CD4-positive, alpha-beta T cell (primary cell): ENCODE measurements at regions of chr3 and their contacts with region 1.

Region 1: DNA sequence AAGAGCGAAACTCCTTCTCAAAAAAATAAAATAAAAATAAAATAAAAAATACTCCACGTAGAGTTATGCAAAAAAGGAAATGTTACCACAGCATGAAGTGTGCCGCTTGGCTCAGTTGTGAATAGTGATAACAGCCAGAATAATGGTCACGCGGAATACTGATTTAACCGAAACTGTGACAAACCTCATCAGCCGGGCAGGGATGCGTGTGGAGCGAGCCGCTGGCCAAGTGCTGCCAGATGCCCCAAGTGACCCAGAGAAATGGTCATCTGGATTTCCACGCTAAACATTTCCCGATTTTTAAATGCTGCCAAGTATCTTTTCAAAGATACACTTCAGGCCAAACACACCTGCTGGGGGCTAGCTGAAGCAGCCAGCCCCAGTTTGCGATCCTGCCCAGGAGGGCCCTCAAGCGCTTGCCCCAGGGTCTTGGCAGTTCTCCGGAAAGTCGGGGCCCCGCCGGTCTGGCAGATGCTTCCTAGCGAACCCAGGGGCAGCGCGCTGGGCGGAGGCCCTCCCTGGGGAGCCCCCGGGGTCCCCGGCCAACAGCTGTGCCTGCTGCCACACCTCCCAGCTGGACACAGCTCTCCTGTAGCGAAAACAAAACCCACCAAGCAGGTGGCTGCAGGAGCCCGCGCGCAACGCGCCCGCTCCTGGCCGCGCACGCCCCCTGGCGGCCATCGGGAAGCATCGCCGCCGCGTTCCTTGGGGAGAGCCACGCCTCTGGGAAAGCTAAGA is 35.1 kb downstream of the CMTM6 start:
- DNase-seq: peak; percentile 44 to 90 (median 72)
- ATAC-seq: peak; percentile 84
- H3K4me3 ChIP-seq: peak overlapping the region; percentile 58
- H3K4me3 Mint-ChIP-seq: peak overlapping the region; percentile 54
- H3K27ac ChIP-seq: peak overlapping the region; percentile 18 to 53
- H3K27ac Mint-ChIP-seq: no peak overlapping the region
- H3K4me1 ChIP-seq: peaks cover 37% of the 10 kb centered on the region
- H3K4me1 Mint-ChIP-seq: peaks cover 55% of the 10 kb centered on the region
- H3K27me3 ChIP-seq: no peaks in the 10 kb centered on the region
- H3K27me3 Mint-ChIP-seq: no peaks in the 10 kb centered on the region
- CTCF ChIP-seq: peak; percentile 99

Region 2: GRCh38 chr3:31777092-31777491 is 690.4 kb before region 1 on chr3:
- CTCF ChIA-PET with region 1: no interaction called
- POLR2A ChIA-PET with region 1: no interaction called
- intact Hi-C with region 1: no loop called
- DNase-seq: no peak
- ATAC-seq: no peak
- H3K4me3 ChIP-seq: no peak overlapping the region
- H3K4me3 Mint-ChIP-seq: no peak overlapping the region
- H3K27ac ChIP-seq: no peak overlapping the region
- H3K27ac Mint-ChIP-seq: no peak overlapping the region
- H3K4me1 ChIP-seq: no peaks in the 10 kb centered on the region
- H3K4me1 Mint-ChIP-seq: no peaks in the 10 kb centered on the region
- H3K27me3 ChIP-seq: no peaks in the 10 kb centered on the region
- H3K27me3 Mint-ChIP-seq: peaks cover 5% of the 10 kb centered on the region
- CTCF ChIP-seq: no peak

Region 3: DNA sequence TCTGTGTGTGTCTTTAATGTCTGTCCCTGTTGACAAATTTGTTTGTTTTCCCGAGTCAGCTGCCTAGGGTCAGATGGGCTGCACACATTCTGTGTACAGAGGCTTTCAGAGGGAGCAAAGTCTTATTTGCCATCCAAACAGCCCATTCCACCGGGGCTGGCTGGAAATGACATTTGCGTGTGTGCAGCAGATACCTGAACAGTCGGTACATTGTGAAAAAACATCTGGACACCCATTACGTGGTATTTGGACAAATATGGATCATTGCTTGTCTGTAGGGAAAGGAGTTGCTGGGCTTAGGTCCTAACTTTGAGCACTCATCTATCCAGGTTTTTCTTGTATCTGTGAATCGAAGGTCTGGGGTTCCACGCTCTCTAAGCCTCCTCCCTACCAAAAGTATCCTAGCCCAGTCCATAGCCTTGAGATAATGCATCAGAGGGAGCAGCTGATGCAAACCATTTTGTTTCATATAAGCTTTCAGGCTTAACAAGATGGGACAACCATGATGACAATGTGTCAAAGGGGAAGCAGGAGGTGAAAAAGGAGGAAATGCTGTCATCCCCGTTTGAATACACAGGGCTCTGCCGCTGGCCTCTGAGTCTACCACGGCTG is 251.2 kb before region 1 on chr3:
- CTCF ChIA-PET with region 1: no interaction called
- POLR2A ChIA-PET with region 1: no interaction called
- intact Hi-C with region 1: no loop called
- DNase-seq: no peak
- ATAC-seq: no peak
- H3K4me3 ChIP-seq: no peak overlapping the region
- H3K4me3 Mint-ChIP-seq: no peak overlapping the region
- H3K27ac ChIP-seq: no peak overlapping the region
- H3K27ac Mint-ChIP-seq: no peak overlapping the region
- H3K4me1 ChIP-seq: no peaks in the 10 kb centered on the region
- H3K4me1 Mint-ChIP-seq: no peaks in the 10 kb centered on the region
- H3K27me3 ChIP-seq: no peaks in the 10 kb centered on the region
- H3K27me3 Mint-ChIP-seq: peaks cover 5% of the 10 kb centered on the region
- CTCF ChIP-seq: no peak

Region 4: DNA sequence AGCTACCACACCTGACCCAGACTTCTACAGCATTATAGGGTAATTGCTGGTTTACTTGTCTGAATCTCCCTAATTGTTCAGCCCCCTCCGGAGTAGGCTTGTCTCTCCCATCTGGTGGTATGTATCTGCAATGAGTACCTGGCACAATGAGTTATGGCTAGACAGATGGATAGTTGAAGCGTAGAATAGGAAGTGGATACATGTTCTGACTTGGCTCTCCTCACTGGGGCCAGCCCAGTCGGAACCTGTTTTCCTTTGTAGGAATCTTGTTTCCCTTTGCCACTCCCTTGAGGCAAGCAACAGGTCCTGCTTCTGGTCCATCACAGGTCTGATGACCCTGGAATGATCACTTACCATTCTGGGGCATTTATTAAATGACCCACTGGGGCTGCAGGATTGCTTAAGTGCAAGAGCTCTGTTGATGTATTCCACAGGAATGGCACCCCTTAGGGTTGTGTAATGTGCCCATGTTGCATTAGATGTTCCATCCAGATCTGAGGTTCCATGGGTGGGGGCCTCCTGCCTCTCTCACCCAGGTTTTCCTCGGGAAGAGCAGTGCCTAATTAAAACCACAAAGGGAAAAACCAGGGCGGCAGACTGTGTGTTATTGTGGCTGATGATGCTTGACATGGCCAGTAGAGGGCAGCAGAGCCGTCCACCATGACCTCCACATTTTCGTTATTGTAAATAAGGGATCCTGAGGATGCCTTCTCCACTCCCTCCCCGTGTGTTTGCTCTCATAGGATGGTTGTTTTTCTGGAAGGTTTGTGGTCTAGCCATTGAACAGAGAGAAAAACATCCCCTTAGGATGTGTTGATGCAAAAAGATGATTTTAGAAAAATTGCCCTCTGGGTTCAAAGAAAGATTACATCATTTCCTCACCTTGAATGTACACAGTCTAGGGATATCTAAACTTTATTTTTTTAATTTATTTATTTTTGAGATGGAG is 171.0 kb before region 1 on chr3:
- CTCF ChIA-PET with region 1: interaction called, 6 read pairs
- POLR2A ChIA-PET with region 1: no interaction called
- intact Hi-C with region 1: loop called (anchors 2 kb)
- DNase-seq: peak; percentile 52 to 88 (median 60)
- ATAC-seq: peak; percentile 62
- H3K4me3 ChIP-seq: no peak overlapping the region
- H3K4me3 Mint-ChIP-seq: peak overlapping the region; percentile 76
- H3K27ac ChIP-seq: peak overlapping the region; percentile 60
- H3K27ac Mint-ChIP-seq: peak overlapping the region; percentile 93
- H3K4me1 ChIP-seq: peaks cover 44% of the 10 kb centered on the region
- H3K4me1 Mint-ChIP-seq: peaks cover 43% of the 10 kb centered on the region
- H3K27me3 ChIP-seq: no peaks in the 10 kb centered on the region
- H3K27me3 Mint-ChIP-seq: no peaks in the 10 kb centered on the region
- CTCF ChIP-seq: peak; percentile 93

Region 5: GRCh38 chr3:32391643-32392535 is 75.6 kb before region 1 on chr3 and contains the start of gene CMTM7:
- CTCF ChIA-PET with region 1: interaction called, 49 read pairs
- POLR2A ChIA-PET with region 1: interaction called, 16 read pairs
- intact Hi-C with region 1: no loop called
- DNase-seq: peak; percentile 32 to 81 (median 52)
- ATAC-seq: peak; percentile 54
- H3K4me3 ChIP-seq: peak within 1 kb of the TSS; percentile 92
- H3K4me3 Mint-ChIP-seq: peak within 1 kb of the TSS; percentile 97
- H3K27ac ChIP-seq: peak within 1 kb of the TSS; percentile 77 to 79
- H3K27ac Mint-ChIP-seq: peak within 1 kb of the TSS; percentile 91
- H3K4me1 ChIP-seq: peaks cover 47% of the 10 kb centered on the region
- H3K4me1 Mint-ChIP-seq: peaks cover 61% of the 10 kb centered on the region
- H3K27me3 ChIP-seq: no peaks in the 10 kb centered on the region
- H3K27me3 Mint-ChIP-seq: no peaks in the 10 kb centered on the region
- CTCF ChIP-seq: no peak
- total RNA-seq, gene CMTM7: 31.5 to 35.2 TPM

Region 6: GRCh38 chr3:32406486-32407408 is 60.8 kb before region 1 on chr3:
- CTCF ChIA-PET with region 1: interaction called, 8 read pairs
- POLR2A ChIA-PET with region 1: interaction called, 3 read pairs
- intact Hi-C with region 1: loop called in 1 of 2 experiments (anchors 2 kb)
- DNase-seq: no peak
- ATAC-seq: no peak
- H3K4me3 ChIP-seq: no peak overlapping the region
- H3K4me3 Mint-ChIP-seq: no peak overlapping the region
- H3K27ac ChIP-seq: no peak overlapping the region
- H3K27ac Mint-ChIP-seq: peak overlapping the region; percentile 70
- H3K4me1 ChIP-seq: peaks cover 50% of the 10 kb centered on the region
- H3K4me1 Mint-ChIP-seq: peaks cover 84% of the 10 kb centered on the region
- H3K27me3 ChIP-seq: no peaks in the 10 kb centered on the region
- H3K27me3 Mint-ChIP-seq: no peaks in the 10 kb centered on the region
- CTCF ChIP-seq: no peak

Region 7: DNA sequence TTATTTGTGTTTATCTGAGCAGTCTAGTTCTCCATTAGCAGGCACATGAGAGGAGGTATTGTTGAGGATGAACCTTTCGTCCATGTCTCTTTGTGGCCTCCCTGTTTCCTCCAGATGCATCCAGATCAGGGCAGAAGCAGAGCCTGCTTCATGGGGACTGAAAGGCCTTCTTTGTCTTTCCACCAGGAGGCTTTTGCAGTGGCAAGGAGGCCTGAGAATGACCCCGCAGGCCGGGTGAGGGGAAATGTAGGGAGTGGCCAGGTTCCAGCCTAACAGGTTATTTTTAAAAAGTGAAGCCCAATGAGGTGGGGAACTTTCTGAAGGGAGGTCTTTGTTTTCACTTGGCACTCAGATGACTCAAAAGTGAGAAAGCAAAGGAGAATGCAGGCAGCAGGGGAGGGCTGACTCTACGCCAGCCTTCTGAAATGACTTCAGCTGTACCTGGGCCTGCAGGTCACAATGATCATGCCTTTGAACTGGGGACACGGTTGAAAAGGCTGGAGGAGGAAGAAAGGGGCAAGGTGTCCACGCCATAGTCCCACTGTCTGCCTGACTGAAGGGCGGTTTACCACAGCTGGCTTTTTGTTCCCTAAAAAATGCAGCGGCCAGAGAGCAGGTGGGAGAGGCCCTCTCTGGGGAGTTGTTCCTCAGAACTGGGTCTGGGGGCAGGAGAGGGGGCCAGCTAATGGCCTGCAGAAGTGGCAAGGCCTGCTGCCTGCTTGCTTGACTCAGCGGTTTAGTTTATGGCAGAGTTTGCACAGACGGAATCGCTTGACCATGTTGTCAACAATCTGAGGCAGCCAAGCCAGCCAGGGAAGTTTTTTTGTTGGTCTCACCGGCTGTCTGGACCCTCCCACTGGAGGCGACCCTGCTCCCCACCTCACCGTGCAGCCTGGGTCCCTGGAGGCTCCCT is 47.1 kb before region 1 on chr3:
- CTCF ChIA-PET with region 1: interaction called, 25 read pairs
- POLR2A ChIA-PET with region 1: interaction called, 12 read pairs
- intact Hi-C with region 1: no loop called
- DNase-seq: peak in 4 of 14 experiments; percentile 39 to 55 (median 44)
- ATAC-seq: peak; percentile 35
- H3K4me3 ChIP-seq: no peak overlapping the region
- H3K4me3 Mint-ChIP-seq: peak overlapping the region; percentile 71
- H3K27ac ChIP-seq: peak overlapping the region; percentile 44 to 48
- H3K27ac Mint-ChIP-seq: peak overlapping the region; percentile 95
- H3K4me1 ChIP-seq: peaks cover 69% of the 10 kb centered on the region
- H3K4me1 Mint-ChIP-seq: peaks cover 99% of the 10 kb centered on the region
- H3K27me3 ChIP-seq: no peaks in the 10 kb centered on the region
- H3K27me3 Mint-ChIP-seq: no peaks in the 10 kb centered on the region
- CTCF ChIP-seq: no peak

Region 8: DNA sequence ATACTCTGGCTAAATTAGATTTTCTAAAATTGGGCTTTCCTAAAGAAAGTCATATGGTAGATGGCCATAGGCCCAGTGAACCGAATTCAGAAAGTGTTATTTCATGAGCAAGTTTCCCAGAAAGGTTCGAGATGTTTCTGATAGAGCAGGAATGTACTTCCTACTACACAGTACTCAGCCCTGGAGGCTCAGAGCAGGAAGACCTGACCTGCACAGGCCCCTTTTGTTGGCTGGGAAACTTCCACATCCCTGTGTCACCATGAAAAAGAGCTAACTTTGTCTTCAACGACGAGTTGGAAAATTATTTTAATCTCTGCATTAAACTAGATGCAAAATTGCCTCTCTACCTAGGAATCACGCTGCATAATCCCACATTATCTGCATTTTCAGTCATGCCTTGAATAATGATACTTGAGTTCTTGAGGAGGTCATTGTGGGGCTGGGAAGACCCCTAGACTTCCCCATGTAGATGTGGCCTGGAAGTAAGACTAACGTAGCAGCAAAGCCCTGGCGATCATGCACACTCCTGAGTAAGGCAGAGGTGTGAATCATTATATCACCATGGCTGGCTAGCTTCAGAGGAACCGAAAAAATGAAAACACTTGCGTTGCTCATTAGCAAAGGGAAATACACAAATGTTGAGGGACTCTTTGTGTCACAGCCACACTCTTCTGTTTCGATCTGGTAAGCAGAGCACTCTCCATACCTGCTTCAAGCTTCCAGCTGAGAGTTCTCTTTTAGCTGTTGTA is 28.7 kb before region 1 on chr3:
- CTCF ChIA-PET with region 1: interaction called, 20 read pairs
- POLR2A ChIA-PET with region 1: interaction called, 5 read pairs
- intact Hi-C with region 1: loop called in 1 of 2 experiments (anchors 5 kb)
- DNase-seq: peak in 2 of 14 experiments; percentile 35 to 40
- ATAC-seq: peak; percentile 50
- H3K4me3 ChIP-seq: no peak overlapping the region
- H3K4me3 Mint-ChIP-seq: peak overlapping the region; percentile 65
- H3K27ac ChIP-seq: peak overlapping the region in 1 of 2 donors; percentile 32
- H3K27ac Mint-ChIP-seq: peak overlapping the region; percentile 95
- H3K4me1 ChIP-seq: peaks cover 58% of the 10 kb centered on the region
- H3K4me1 Mint-ChIP-seq: peaks cover 72% of the 10 kb centered on the region
- H3K27me3 ChIP-seq: no peaks in the 10 kb centered on the region
- H3K27me3 Mint-ChIP-seq: no peaks in the 10 kb centered on the region
- CTCF ChIP-seq: no peak

Region 9: DNA sequence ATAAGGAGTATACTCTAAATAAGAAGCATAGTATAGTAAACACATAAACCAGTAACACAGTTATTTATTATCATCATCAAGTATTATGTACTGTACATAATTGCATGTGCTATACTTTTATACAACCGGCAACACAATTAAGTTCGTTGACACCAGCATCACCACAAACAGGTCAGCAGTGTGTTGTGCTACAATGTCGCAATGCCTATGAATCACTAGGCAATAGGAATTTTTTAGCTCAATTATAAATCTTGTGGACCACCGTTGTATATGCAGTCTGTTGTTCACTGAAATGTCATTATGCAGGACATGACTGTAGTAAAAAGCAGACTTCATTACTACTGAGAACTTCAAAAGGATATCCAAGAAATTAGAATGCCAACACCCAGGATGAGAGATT is 1508.0 kb after region 1 on chr3:
- CTCF ChIA-PET with region 1: no interaction called
- POLR2A ChIA-PET with region 1: no interaction called
- intact Hi-C with region 1: no loop called
- DNase-seq: no peak
- ATAC-seq: no peak
- H3K4me3 ChIP-seq: no peak overlapping the region
- H3K4me3 Mint-ChIP-seq: no peak overlapping the region
- H3K27ac ChIP-seq: no peak overlapping the region
- H3K27ac Mint-ChIP-seq: no peak overlapping the region
- H3K4me1 ChIP-seq: no peaks in the 10 kb centered on the region
- H3K4me1 Mint-ChIP-seq: no peaks in the 10 kb centered on the region
- H3K27me3 ChIP-seq: no peaks in the 10 kb centered on the region
- H3K27me3 Mint-ChIP-seq: peaks cover 5% of the 10 kb centered on the region
- CTCF ChIP-seq: no peak